Activated CD4-positive, alpha-beta memory T cell treated with anti-CD3 and anti-CD28 coated beads for 36 hours (primary cell): ENCODE measurements at regions of chr16 and their contacts with region 1.

Region 1: DNA sequence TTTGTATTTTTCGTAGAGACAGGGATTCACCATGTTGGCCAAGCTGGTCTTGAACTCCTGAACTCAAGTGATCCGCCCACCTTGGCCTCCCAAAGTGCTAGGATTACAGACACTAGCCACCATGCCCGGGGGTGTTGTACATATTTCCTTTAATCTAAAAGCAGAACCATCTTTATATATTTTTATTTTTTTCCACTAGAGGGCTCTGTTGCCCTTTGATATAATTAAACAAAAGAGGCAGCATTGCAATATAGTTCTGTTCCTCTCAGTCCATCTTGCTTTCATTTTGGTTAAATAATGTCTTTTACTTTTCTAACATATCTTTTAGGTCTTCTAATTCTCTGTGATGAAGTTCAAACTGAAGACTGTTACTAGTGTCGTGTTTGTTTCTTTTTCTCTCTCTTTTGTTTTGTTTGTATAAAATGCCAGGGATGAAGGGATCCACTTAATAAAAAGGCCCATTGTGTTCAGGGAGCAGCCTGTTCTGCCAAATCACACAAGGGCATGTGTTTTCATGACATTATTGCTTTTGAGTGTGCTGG is 23.4 kb downstream of the WWOX start:
- DNase-seq: peak; percentile 28
- H3K4me3 Mint-ChIP-seq: peak overlapping the region; percentile 31
- H3K27ac Mint-ChIP-seq: no peak overlapping the region
- H3K4me1 Mint-ChIP-seq: peaks cover 7% of the 10 kb centered on the region
- H3K27me3 Mint-ChIP-seq: no peaks in the 10 kb centered on the region

Region 2: DNA sequence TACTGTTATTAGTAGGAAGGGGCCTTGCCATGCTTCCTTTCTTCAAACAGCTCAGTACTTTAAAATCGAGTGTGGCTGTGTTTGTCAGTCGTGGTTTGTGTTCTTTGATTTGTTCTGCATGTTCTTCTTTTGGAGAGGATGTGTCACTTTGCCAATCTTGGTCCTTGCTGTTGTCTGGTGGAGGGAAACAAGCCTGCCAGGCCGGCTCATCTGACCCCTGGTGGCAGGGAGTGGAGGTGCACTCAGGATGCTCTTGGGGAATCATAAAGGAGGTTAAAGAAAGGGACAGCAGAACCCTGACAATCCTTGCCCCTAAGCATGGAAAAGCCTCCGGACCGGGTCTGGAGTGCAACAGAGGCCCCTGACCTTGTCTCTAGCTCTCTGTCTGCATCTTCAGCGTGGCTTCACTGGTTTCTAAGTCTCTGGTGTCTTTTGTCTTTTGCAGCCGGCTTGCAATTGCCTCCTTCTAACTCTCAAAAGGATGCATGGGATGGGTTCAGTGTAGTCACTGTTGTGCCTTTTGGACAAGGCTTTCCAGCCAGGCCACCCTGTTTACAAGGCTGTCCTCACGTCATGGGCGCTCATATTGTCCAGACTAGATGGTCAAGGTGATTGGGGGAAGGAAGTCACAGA is 112.4 kb after region 1 on chr16:
- CTCF ChIA-PET with region 1: interaction called, 15 read pairs
- POLR2A ChIA-PET with region 1: no interaction called
- intact Hi-C with region 1: loop called (anchors 1 kb)
- DNase-seq: peak; percentile 79
- H3K4me3 Mint-ChIP-seq: no peak overlapping the region
- H3K27ac Mint-ChIP-seq: no peak overlapping the region
- H3K4me1 Mint-ChIP-seq: peaks cover 2% of the 10 kb centered on the region
- H3K27me3 Mint-ChIP-seq: no peaks in the 10 kb centered on the region